CD8-positive, alpha-beta T cell (primary cell): ENCODE measurements at regions of chr5 and their contacts with region 1.

Region 1: GRCh38 chr5:60944904-60945812 is at the starts of genes ERCC8 and NDUFAF2:
- DNase-seq: peak; percentile 77 to 93 (median 87)
- ATAC-seq: peak; percentile 98
- H3K4me3 ChIP-seq: peak within 1 kb of the TSS; percentile 67 to 90
- H3K4me3 Mint-ChIP-seq: no peak within 1 kb of the TSS
- H3K27ac ChIP-seq: peak within 1 kb of the TSS; percentile 64 to 74
- H3K27ac Mint-ChIP-seq: no peak within 1 kb of the TSS
- H3K4me1 ChIP-seq: peaks cover 23% of the 10 kb centered on the region
- H3K4me1 Mint-ChIP-seq: peaks cover 30% of the 10 kb centered on the region
- H3K27me3 ChIP-seq: no peaks in the 10 kb centered on the region
- H3K27me3 Mint-ChIP-seq: no peaks in the 10 kb centered on the region
- CTCF ChIP-seq: no peak
- total RNA-seq, gene ERCC8: 2.5 to 3.0 TPM
- total RNA-seq, gene NDUFAF2: 5.8 to 7.1 TPM

Region 2: DNA sequence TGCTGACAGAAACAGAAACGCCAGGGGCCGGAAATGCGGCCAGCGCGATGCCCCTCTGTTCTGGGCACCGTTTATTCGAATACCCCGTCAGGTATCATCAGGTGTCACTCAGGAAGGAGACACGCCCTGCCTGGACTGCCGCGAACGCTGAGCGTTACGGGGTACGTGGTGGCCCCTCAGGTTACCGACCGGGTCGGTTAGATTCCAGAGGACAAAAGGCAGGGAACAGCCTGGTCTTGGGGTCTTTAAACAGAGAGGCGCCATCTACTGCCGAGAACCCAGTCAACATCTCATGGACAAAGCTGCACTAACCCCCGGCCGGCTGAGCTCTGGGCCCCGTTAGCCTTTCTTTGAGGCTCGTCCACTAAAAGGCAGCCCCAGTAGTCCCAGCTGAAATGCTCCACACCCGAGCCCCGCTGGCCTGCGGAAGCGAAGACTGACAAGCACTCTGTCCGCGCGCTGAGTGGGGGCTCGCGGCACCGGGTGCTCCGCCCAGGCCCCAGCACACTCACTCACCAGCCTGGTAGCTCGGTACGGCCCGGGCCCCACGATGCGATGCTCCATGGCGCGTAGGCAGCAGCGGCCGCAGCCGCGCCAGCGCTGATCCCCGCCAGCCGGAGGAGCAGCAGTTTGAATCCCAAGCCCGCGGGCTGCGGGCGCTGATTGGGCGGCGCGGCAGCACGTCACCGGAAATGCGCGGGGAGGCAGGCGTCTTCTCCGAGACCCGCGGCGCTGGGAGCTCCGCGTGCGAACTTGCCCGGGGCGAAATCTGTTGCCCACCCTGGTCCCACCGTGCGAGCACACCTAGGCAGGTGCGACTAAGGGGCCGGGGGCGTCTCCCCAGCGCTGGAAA is 245.4 kb before region 1 on chr5 and contains the start of gene DEPDC1B:
- CTCF ChIA-PET with region 1: no interaction called
- POLR2A ChIA-PET with region 1: no interaction called
- intact Hi-C with region 1: loop called (anchors 1 to 5 kb)
- DNase-seq: peak; percentile 68 to 90 (median 80)
- ATAC-seq: peak; percentile 91
- H3K4me3 ChIP-seq: peak within 1 kb of the TSS; percentile 76 to 96
- H3K4me3 Mint-ChIP-seq: peak within 1 kb of the TSS; percentile 89
- H3K27ac ChIP-seq: peak within 1 kb of the TSS; percentile 45 to 61
- H3K27ac Mint-ChIP-seq: peak within 1 kb of the TSS; percentile 50
- H3K4me1 ChIP-seq: peaks cover 8% of the 10 kb centered on the region
- H3K4me1 Mint-ChIP-seq: peaks cover 16% of the 10 kb centered on the region
- H3K27me3 ChIP-seq: no peaks in the 10 kb centered on the region
- H3K27me3 Mint-ChIP-seq: no peaks in the 10 kb centered on the region
- CTCF ChIP-seq: no peak
- total RNA-seq, gene DEPDC1B: 0.27 to 0.36 TPM

Region 3: DNA sequence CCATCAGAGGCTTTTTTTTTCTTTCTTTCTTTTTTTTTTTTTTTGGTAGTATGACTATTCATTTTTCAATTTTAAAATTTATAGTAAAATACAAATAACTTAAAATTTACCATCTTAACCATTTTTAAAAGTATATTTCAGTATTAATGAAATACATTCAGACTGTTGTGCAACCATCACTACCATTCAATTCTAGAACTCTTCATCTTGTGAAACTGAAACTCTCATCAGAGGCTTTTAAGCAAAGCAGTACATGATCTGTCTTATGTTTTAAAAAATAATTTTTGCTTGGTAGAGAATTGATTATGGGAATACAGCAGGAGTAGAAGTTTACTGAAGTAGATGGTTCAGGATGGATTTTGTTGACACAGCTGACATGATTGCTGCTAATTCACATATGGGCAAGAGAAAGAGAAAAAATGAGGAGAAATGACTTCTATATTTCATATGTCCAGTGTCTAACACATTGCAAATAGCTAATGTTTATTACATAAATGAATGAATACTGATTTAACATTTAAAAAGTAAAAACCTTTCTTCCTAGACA is 114.5 kb before region 1 on chr5:
- CTCF ChIA-PET with region 1: no interaction called
- POLR2A ChIA-PET with region 1: no interaction called
- intact Hi-C with region 1: no loop called
- DNase-seq: no peak
- ATAC-seq: no peak
- H3K4me3 ChIP-seq: no peak overlapping the region
- H3K4me3 Mint-ChIP-seq: no peak overlapping the region
- H3K27ac ChIP-seq: no peak overlapping the region
- H3K27ac Mint-ChIP-seq: no peak overlapping the region
- H3K4me1 ChIP-seq: no peaks in the 10 kb centered on the region
- H3K4me1 Mint-ChIP-seq: no peaks in the 10 kb centered on the region
- H3K27me3 ChIP-seq: no peaks in the 10 kb centered on the region
- H3K27me3 Mint-ChIP-seq: peaks cover 2% of the 10 kb centered on the region
- CTCF ChIP-seq: no peak

Region 4: DNA sequence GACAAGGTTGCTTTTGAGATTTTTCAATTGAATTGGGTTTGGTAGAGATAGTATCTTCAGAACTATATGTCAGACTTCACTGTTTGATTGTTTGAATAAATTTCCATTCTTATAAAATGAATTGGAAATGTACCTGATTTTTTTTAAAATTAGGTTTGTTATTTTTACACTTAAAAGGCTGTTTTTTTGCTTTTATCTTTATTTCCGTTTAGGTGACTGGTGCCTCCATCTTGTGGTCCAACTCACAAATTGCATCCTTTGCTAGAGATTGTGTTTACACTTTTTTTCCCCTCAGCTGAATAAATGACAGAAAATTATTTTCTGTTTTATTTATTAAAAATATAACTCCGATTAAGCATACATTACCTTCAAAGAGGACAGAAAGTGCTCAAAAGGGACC is 15.4 kb after region 1 on chr5:
- CTCF ChIA-PET with region 1: interaction called, 9 read pairs
- POLR2A ChIA-PET with region 1: no interaction called
- intact Hi-C with region 1: loop called in 1 of 2 experiments (anchors 1 kb)
- DNase-seq: peak in 3 of 9 experiments; percentile 18 to 49 (median 30)
- ATAC-seq: peak; percentile 59
- H3K4me3 ChIP-seq: no peak overlapping the region
- H3K4me3 Mint-ChIP-seq: no peak overlapping the region
- H3K27ac ChIP-seq: no peak overlapping the region
- H3K27ac Mint-ChIP-seq: no peak overlapping the region
- H3K4me1 ChIP-seq: peaks cover 5% of the 10 kb centered on the region
- H3K4me1 Mint-ChIP-seq: peaks cover 22% of the 10 kb centered on the region
- H3K27me3 ChIP-seq: no peaks in the 10 kb centered on the region
- H3K27me3 Mint-ChIP-seq: no peaks in the 10 kb centered on the region
- CTCF ChIP-seq: peak; percentile 74

Region 5: DNA sequence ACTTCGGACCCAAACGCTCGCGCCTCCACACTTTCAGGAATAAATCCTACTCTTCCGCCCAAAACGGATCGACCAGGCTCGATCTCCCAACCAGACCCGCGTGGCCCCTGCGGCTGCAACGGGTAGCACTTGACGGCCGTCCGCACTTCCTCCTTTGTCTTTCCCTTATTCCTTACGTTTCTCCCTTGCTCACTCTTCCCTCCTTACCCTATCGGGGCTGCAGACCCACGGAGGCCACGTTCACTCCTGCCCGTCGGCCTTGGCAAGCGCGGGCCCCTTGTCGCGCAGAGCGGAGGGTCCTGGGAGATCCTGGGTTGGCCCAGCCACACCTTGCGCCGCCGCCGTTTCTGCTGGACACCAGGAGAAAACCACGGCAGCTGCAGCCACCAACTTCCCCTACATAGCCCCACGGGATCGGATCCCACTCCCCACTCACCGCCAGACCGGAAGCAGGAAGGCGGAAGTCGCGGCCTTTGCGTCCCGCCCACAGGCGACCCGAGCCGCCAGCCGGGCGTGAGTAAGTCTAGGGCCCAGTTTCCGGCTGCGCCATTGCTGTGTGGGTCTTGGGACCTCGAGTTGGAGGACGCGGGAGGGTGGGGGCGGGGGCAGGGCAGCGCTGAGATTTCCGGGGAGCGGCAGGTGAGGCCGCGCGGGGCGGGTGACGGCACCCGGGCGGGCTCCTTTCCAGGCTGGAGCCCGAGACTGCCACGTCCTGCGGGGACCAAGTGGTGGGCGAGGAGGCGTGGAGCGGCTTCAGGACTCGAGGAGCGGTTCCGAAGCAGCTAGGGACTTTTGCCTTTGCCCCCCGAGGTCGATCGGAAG is 217.1 kb after region 1 on chr5 and contains the start of gene SMIM15:
- CTCF ChIA-PET with region 1: no interaction called
- POLR2A ChIA-PET with region 1: no interaction called
- intact Hi-C with region 1: loop called (anchors 2 to 5 kb)
- DNase-seq: peak; percentile 57 to 88 (median 79)
- ATAC-seq: peak; percentile 88
- H3K4me3 ChIP-seq: peak within 1 kb of the TSS; percentile 86 to 90
- H3K4me3 Mint-ChIP-seq: peak within 1 kb of the TSS; percentile 95
- H3K27ac ChIP-seq: peak within 1 kb of the TSS; percentile 70 to 79
- H3K27ac Mint-ChIP-seq: peak within 1 kb of the TSS; percentile 96
- H3K4me1 ChIP-seq: peaks cover 18% of the 10 kb centered on the region
- H3K4me1 Mint-ChIP-seq: peaks cover 50% of the 10 kb centered on the region
- H3K27me3 ChIP-seq: no peaks in the 10 kb centered on the region
- H3K27me3 Mint-ChIP-seq: no peaks in the 10 kb centered on the region
- CTCF ChIP-seq: no peak
- total RNA-seq, gene SMIM15: 22.6 to 24.8 TPM

Region 6: DNA sequence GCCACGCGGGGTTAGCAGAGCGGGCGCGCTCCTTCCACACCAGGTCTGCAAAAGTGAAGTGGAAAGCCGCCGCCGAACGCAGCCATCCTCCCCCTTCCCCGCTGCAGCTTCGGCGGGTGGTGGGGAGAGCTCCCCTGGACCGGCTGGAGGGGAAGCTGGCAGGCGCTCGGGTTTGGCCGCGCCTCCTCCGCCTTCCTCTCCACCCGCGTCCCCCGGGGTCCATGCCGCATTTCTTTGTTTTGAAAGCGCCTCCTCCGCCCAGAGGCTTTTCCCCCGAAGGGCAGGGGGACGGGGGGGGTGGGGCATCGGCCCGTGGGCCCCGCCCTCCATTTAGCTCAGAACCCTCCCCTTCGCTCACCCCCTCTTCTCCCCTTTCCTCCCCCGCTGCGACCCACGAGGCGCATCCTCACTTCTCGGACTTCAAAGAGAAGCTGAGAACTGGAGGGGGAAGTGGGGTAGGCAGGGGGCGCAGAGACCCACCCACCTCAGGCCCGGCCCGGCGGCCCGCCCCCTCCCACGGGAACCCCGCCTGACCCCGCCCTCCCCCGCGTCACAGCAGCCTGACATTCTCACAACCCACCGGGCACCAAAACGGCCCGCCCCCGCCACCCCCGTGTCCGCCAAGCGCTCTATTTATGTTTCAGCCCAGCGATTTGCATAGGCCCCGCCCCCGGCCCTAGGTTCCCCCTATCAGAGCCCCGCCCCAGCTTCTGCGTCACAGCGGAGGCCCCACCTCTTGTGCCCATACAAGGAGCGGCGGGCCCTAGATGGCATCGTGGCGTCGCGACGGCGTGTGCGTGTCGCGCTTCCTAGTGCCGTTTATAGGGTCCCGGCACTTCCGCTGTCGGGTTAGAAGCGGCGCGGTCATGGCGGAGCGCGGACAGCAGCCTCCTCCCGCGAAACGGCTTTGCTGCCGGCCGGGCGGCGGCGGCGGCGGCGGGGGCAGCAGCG is 386.5 kb after region 1 on chr5 and contains the start of gene ZSWIM6:
- CTCF ChIA-PET with region 1: no interaction called
- POLR2A ChIA-PET with region 1: interaction called, 5 read pairs
- intact Hi-C with region 1: loop called (anchors 1 to 5 kb)
- DNase-seq: peak; percentile 98 to 100 (median 99)
- ATAC-seq: peak; percentile 82
- H3K4me3 ChIP-seq: peak within 1 kb of the TSS; percentile 93 to 94
- H3K4me3 Mint-ChIP-seq: peak within 1 kb of the TSS; percentile 95
- H3K27ac ChIP-seq: peak within 1 kb of the TSS; percentile 84 to 93
- H3K27ac Mint-ChIP-seq: peak within 1 kb of the TSS; percentile 97
- H3K4me1 ChIP-seq: peaks cover 20% of the 10 kb centered on the region
- H3K4me1 Mint-ChIP-seq: peaks cover 51% of the 10 kb centered on the region
- H3K27me3 ChIP-seq: no peaks in the 10 kb centered on the region
- H3K27me3 Mint-ChIP-seq: peaks cover 14% of the 10 kb centered on the region
- CTCF ChIP-seq: no peak
- total RNA-seq, gene ZSWIM6: 3.9 to 4.1 TPM

Region 7: DNA sequence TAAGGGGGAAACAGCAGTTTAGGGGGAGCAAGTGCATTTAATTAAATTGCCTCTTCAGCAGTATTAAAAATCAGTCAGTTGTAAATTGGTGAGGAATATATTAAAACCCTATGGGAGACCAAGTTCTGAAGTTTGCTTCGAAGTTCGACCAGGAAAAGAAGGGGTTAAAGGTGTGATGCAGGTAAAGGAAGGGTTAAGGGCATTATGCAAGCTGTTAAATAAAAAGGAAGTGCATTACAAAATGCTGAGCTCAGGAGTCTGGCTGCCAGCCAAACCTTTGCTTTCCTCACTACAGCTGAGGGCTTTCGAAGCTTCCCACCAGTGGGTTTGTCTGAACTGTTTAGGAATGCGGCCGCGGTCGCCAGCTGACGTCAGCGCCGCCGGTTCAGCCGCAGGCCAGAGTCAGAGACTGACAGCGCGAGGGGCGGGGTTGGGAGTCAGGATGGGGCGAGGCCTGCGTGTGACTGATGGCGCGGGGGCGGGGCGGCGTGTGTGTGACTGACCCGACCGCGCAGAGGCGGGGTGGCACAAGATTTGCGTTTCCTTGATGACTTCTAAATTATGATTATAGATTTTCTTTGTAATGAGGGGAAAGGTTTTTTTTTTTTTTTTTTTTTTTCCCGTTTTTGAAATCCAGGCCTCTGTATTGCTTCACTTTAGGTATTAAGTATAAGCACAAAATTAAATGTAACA is 463.5 kb after region 1 on chr5:
- CTCF ChIA-PET with region 1: no interaction called
- POLR2A ChIA-PET with region 1: no interaction called
- intact Hi-C with region 1: loop called (anchors 1 to 5 kb)
- DNase-seq: peak; percentile 94 to 100 (median 98)
- ATAC-seq: peak; percentile 97
- H3K4me3 ChIP-seq: peak overlapping the region; percentile 2 to 30
- H3K4me3 Mint-ChIP-seq: peak overlapping the region; percentile 73
- H3K27ac ChIP-seq: peak overlapping the region in 1 of 2 experiments; percentile 53
- H3K27ac Mint-ChIP-seq: peak overlapping the region; percentile 64
- H3K4me1 ChIP-seq: peaks cover 16% of the 10 kb centered on the region
- H3K4me1 Mint-ChIP-seq: peaks cover 30% of the 10 kb centered on the region
- H3K27me3 ChIP-seq: no peaks in the 10 kb centered on the region
- H3K27me3 Mint-ChIP-seq: no peaks in the 10 kb centered on the region
- CTCF ChIP-seq: no peak

Region 8: DNA sequence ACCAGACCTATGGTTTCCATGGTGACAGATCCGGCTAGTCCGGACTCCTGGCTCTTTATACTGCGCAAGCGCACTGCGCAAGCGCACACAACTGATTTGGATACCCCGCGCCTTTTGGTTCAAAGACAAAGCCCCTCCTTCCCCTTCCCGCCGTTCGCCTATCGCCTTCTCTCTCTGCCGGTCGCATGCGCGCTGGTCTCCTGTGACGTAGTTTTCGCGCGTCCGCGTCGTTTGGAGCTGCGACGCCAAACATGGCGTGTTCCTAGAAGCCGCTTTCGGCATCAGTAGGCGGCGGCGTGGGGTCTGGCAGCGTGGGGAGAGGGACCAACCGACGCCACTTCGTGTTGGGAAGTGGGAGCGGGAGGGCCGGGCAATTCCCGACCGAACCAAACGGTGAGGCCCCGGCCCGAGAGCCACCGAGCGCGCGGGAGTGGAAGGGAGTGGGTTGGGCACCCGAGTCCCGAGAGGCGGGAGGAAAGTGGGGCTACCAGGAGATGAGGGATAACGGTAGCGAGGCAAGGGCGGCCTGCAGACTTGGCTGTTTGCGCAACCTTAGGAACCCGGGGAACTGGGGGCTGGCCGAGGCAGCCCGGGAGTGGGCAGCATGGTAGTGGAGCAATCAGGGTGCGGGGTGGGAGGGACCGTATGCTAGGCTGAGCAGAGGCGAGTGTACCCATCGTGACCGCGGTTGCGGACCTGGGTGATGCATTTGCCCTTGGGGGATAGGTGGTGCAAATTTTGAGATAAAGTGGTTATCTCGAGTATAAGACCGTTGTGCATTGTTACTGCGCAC is 1467.6 kb after region 1 on chr5 and contains the start of gene IPO11:
- CTCF ChIA-PET with region 1: no interaction called
- POLR2A ChIA-PET with region 1: no interaction called
- intact Hi-C with region 1: loop called in 1 of 2 experiments (anchors 10 kb)
- DNase-seq: peak; percentile 97 to 100 (median 99)
- ATAC-seq: peak; percentile 96
- H3K4me3 ChIP-seq: peak within 1 kb of the TSS; percentile 78 to 98
- H3K4me3 Mint-ChIP-seq: peak within 1 kb of the TSS; percentile 88
- H3K27ac ChIP-seq: peak within 1 kb of the TSS; percentile 80 to 84
- H3K27ac Mint-ChIP-seq: peak within 1 kb of the TSS; percentile 88
- H3K4me1 ChIP-seq: peaks cover 14% of the 10 kb centered on the region
- H3K4me1 Mint-ChIP-seq: peaks cover 30% of the 10 kb centered on the region
- H3K27me3 ChIP-seq: no peaks in the 10 kb centered on the region
- H3K27me3 Mint-ChIP-seq: no peaks in the 10 kb centered on the region
- CTCF ChIP-seq: no peak
- total RNA-seq, gene IPO11: 17.0 to 17.2 TPM